ENCODE measurements at regions of chr5 and their contacts with region 1.

Region 1: GRCh38 chr5:1325870-1326532 is 18.9 kb downstream of the CLPTM1L start:
- DNase-seq: peak; percentile 47
- H3K4me3 Mint-ChIP-seq: peak overlapping the region; percentile 61
- H3K27ac Mint-ChIP-seq: peak overlapping the region; percentile 95
- H3K4me1 Mint-ChIP-seq: peaks cover 45% of the 10 kb centered on the region
- H3K27me3 Mint-ChIP-seq: no peaks in the 10 kb centered on the region
- CTCF ChIP-seq: no peak

Region 2: GRCh38 chr5:1315709-1316587 is 10.1 kb before region 1 on chr5:
- CTCF ChIA-PET with region 1: interaction called, 3 read pairs
- POLR2A ChIA-PET with region 1: interaction called, 12 read pairs
- intact Hi-C with region 1: no loop called
- DNase-seq: peak; percentile 90
- H3K4me3 Mint-ChIP-seq: no peak overlapping the region
- H3K27ac Mint-ChIP-seq: no peak overlapping the region
- H3K4me1 Mint-ChIP-seq: peaks cover 8% of the 10 kb centered on the region
- H3K27me3 Mint-ChIP-seq: no peaks in the 10 kb centered on the region
- CTCF ChIP-seq: no peak

Region 3: DNA sequence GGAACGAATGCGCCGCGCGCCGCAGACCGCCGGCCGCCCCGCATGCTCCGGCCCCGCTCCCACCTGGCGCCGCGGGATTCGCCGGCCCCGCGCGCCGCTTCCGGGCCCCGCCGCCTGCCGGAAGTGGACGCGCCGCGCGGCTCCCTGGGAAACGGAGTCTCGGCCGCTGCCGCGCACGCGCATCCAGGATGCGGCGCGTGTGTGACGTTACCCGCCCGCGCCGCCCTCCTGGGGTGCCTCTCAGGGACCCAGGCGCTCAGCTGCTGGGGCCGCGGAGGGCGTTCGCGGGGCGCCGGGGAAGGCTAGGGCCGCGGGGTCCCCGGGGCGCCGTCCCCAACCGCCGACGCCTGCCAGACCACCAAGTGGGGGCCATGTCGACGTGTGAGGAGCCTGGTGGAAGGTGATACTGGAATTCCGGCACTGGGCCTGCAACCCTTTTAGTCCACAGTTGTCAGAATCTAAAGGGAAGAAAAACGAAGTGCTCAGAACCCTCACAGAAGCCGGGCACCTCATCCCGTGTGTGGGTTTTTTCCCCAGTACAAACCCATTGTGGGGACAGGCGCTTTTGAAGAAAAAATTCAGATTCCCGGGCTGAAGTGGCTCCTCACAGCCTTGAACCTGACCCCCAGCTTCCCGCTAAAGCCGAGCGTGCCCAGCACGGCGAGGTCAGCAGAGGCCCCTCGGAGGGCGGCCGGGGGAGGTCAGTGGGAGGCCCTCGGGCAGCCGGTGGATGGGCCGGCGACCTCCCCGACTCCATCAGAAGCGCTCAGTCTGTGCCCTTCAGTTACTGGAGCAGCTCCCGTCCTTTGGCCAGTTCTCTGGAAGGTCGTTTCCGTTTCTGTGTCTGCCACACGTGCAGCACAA is 19.2 kb after region 1 on chr5 and contains the start of gene CLPTM1L:
- CTCF ChIA-PET with region 1: interaction called, 4 read pairs
- POLR2A ChIA-PET with region 1: interaction called, 18 read pairs
- intact Hi-C with region 1: loop called (anchors 2 kb)
- DNase-seq: peak; percentile 81
- H3K4me3 Mint-ChIP-seq: peak within 1 kb of the TSS; percentile 83
- H3K27ac Mint-ChIP-seq: peak within 1 kb of the TSS; percentile 80
- H3K4me1 Mint-ChIP-seq: peaks cover 16% of the 10 kb centered on the region
- H3K27me3 Mint-ChIP-seq: no peaks in the 10 kb centered on the region
- CTCF ChIP-seq: no peak
- total RNA-seq, gene CLPTM1L: 116 and 128 TPM in 2 replicates

Region 4: GRCh38 chr5:1366514-1366913 is 40.5 kb after region 1 on chr5:
- CTCF ChIA-PET with region 1: no interaction called
- POLR2A ChIA-PET with region 1: no interaction called
- intact Hi-C with region 1: no loop called
- DNase-seq: no peak
- H3K4me3 Mint-ChIP-seq: no peak overlapping the region
- H3K27ac Mint-ChIP-seq: no peak overlapping the region
- H3K4me1 Mint-ChIP-seq: no peaks in the 10 kb centered on the region
- H3K27me3 Mint-ChIP-seq: peaks cover 54% of the 10 kb centered on the region
- CTCF ChIP-seq: no peak

Region 5: DNA sequence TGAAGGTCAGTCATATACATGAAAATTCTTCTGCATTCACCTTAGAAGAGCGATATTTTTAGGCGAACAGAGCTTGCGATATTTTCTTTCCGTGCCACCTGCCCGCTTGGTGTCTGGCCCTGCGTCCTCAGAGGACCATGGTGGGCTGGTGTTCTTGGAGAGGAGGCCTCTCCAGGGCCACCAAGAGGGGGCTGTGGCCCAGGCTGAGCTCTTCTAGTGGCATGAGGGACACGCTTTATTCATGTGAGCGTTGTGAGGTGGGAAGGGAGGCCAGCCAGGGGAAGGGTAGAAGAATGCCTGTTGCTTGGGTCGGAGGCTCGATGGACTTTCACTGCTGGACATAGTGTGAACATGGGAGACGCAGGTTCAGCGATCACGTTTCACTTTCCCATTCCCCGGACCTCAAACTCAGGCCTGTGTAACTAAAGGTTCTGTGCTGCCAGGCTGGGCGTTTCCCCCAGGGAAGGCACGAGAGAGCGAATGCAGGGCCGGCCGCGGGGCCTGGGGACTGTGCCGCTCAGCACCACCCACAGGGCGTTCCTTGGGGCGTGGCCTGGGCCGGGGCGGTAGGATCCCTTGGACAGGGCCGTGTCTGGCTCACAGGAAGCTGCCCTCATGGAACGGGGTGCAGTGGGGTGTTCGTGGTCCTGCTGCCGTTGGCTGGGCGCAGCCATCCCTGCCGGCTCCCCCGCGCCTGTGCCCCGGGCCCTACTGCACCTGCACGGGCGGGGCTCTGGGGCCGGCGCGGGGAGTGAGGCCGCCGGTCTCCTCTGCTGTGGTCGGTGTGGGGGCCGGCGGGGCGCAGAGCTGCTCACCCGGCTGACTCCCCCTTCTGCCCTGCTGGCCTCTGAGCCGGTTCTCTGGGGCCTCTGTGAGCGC is 59.6 kb after region 1 on chr5:
- CTCF ChIA-PET with region 1: no interaction called
- POLR2A ChIA-PET with region 1: no interaction called
- intact Hi-C with region 1: no loop called
- DNase-seq: peak; percentile 37
- H3K4me3 Mint-ChIP-seq: peak overlapping the region; percentile 75
- H3K27ac Mint-ChIP-seq: no peak overlapping the region
- H3K4me1 Mint-ChIP-seq: peaks cover 9% of the 10 kb centered on the region
- H3K27me3 Mint-ChIP-seq: peaks cover 41% of the 10 kb centered on the region
- CTCF ChIP-seq: no peak

Measured in MCF 10A (cell line).